HEK293 (cell line): ENCODE measurements at regions of chr1 and their contacts with region 1.

Region 1: DNA sequence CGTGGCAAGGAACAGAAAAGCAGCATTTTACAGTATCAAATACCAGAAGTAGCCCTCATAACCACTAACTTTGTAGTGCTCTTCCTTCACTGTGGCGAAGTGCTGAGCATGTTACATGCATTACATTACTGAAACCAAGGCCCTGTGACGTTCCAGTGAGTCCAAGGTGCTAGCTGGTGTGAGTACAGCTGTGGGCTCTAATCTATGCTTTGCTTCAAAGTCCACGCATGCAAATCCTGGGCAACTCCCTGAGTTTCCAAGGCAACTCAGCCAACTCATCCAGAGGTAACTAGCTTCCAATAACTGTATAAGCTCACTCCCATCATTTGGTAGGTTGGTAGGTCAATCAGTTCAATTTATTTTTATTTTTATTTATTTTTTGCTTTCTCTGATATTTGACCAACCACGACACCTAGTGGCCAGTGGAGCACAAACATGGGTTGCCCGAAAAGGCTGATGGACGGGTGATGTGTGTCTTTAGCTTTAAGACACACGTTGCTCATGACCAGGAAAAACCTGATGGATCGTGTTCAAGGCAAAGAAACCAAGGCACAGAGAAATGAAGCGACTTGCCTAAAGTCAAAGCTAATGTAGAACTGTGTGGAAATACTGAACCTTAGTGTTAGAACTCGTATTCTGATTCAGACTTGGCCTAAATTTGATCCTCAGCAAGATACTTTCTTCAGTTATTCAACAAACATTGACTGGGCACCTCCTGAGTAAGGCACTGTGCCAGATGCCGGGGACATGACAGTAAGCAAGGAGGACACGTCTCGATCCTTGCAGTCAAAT is 73.0 kb downstream of the GNG12 start:
- H3K4me3 ChIP-seq: no peak overlapping the region
- H3K27ac ChIP-seq: no peak overlapping the region
- H3K4me1 ChIP-seq: no peaks in the 10 kb centered on the region
- CTCF ChIP-seq: peak; percentile 45

Region 2: GRCh38 chr1:67535474-67535873 is 224.8 kb before region 1 on chr1:
- CTCF ChIA-PET with region 1: interaction called, 159 read pairs
- POLR2A ChIA-PET with region 1: interaction called, 4 read pairs
- H3K4me3 ChIP-seq: no peak overlapping the region
- H3K27ac ChIP-seq: no peak overlapping the region
- H3K4me1 ChIP-seq: no peaks in the 10 kb centered on the region
- CTCF ChIP-seq: peak; percentile 83

Region 3: GRCh38 chr1:67561704-67562113 is 198.5 kb before region 1 on chr1:
- CTCF ChIA-PET with region 1: interaction called, 95 read pairs
- POLR2A ChIA-PET with region 1: no interaction called
- H3K4me3 ChIP-seq: no peak overlapping the region
- H3K27ac ChIP-seq: no peak overlapping the region
- H3K4me1 ChIP-seq: no peaks in the 10 kb centered on the region
- CTCF ChIP-seq: peak; percentile 54; the same call in 1 of the 2 replicates

Region 4: GRCh38 chr1:67674260-67675011 is 85.8 kb before region 1 on chr1:
- CTCF ChIA-PET with region 1: interaction called, 13 read pairs
- POLR2A ChIA-PET with region 1: no interaction called
- H3K4me3 ChIP-seq: no peak overlapping the region
- H3K27ac ChIP-seq: no peak overlapping the region
- H3K4me1 ChIP-seq: peaks cover 7% of the 10 kb centered on the region
- CTCF ChIP-seq: no peak

Region 5: GRCh38 chr1:67691712-67692111 is 68.5 kb before region 1 on chr1:
- CTCF ChIA-PET with region 1: interaction called, 18 read pairs
- POLR2A ChIA-PET with region 1: interaction called, 40 read pairs
- H3K4me3 ChIP-seq: no peak overlapping the region
- H3K27ac ChIP-seq: no peak overlapping the region
- H3K4me1 ChIP-seq: no peaks in the 10 kb centered on the region; the same call in 1 of the 2 replicates
- CTCF ChIP-seq: no peak

Region 6: DNA sequence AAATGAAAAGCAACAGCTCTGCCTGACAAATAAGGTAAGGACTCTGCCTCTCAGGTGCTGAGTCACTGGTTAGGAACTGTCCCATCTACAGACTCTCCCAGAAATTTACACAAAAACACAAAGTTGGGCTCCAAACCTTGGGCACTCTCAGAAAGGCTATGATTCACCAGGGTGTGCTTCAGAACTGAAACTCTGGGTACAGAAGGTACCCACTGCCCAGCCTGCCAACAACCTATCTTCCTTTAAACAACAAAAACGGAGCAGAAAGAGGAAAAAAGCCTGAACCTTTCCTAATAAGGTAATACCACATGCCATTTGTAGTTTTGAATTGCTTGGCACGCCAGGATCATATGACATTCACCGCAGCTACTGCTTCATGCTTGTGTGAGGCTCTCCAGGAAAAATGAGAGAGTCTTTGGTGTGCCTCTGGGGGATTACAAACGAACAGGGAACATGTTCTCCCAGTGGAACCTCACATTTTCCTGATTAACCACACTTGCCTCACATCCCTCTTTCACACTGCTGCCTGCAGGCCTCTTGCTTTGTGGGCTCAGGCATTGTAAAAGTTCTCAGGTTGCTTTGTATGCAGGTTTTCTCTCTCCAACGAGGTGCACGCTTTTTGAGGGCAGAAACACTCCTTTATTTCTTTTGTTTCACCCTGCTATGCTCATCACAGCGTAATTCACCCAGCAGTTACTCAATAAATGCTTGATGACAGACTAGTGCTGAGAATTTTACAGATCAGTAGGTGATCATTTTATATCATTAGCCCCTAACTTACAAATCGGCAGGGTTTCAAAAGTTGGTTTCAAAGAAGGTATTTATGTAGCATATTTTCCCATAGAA is 10.2 kb before region 1 on chr1:
- CTCF ChIA-PET with region 1: interaction called, 27 read pairs
- POLR2A ChIA-PET with region 1: no interaction called
- H3K4me3 ChIP-seq: no peak overlapping the region
- H3K27ac ChIP-seq: peak overlapping the region; percentile 58
- H3K4me1 ChIP-seq: peaks cover 13% of the 10 kb centered on the region
- CTCF ChIP-seq: no peak